Motor neuron (in vitro differentiated cells): ENCODE measurements at regions of chr10 and their contacts with region 1.

Region 1: DNA sequence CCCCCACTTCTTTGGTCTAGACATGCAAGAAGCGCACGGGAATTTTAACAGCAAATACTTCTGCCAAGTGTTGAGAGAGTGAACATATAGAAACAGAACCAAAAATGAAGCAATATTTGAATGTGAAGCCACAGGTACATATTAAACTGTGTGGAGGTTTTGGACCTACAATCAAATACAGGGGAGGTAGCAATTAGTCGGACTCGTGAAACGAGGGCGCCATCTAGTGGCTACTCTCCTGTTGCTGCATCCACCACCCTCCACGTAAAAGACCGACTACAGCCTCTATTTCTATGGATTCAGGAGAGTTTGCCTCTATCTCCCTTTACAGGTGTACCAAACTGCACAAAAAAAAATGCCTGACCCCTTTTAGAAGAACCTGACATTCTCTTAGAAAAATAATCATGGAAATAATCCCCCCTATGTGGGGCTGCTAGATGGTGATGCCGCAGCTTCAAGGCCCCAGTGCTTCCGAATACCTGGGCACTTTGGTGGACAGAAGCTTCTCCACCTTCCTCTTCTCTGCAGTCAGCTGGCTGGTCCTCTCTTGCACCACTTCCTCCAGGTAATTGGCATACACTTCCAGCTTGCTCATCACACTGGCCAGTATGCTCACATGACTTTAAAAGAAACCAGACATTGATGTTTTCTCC is 31.7 kb downstream of the TECTB start:
- ATAC-seq: peak; percentile 86 to 100 (median 94)
- H3K4me3 ChIP-seq: no peak overlapping the region
- H3K27ac ChIP-seq: no peak overlapping the region
- H3K4me1 ChIP-seq: no peaks in the 10 kb centered on the region

Region 2: GRCh38 chr10:111076191-111076681 is 1238.7 kb before region 1 on chr10:
- in situ Hi-C with region 1: loop called in 1 of 9 experiments (anchors 25 kb)
- ATAC-seq: peak; percentile 71 to 83 (median 80)
- H3K4me3 ChIP-seq: peak overlapping the region; percentile 36 to 50 (median 45)
- H3K27ac ChIP-seq: no peak overlapping the region
- H3K4me1 ChIP-seq: peaks cover 0 to 6% of the 10 kb centered on the region in 2 donors

Region 3: DNA sequence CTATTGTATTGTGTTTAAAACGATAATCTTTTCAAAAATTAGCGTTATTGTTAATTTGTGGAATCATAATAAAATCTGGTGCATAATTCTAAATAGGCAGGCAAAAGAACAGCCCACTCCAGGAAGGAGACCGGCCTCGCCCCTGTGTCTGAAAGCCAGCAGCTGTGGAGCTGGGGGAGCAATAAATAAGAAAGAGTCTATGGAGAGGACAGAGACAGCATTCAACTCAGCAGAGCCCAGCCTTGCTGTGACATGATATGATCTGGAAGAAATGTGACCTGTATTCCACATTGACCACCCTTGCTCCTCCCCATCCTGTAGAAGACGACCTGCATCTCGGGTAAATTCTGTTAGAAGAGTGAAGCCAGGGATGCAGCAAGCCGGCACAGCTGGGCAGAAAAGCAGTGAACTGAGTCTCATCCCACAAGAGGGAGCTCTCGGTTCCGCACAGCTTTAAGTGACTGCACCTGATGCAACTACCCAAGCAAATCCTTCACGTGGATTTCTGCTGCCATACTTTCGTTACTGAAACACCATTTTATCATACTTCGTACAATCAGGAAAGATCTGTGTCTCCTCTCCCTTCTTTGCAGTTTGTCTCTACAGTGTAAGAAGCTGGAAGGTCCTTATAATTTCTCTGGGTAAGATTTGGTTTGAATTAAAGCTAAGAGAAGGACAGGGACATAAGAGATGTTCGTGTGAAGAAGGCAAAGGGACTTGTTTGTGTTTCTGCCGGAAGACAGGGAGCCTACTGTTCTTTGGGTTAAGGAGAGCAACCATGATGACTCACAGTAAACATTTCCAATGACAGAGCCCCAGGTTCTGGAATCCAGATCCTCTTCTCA is 558.5 kb before region 1 on chr10:
- in situ Hi-C with region 1: loop called in 1 of 9 experiments (anchors 25 kb)
- ATAC-seq: peak; percentile 78 to 98 (median 91)
- H3K4me3 ChIP-seq: no peak overlapping the region
- H3K27ac ChIP-seq: no peak overlapping the region
- H3K4me1 ChIP-seq: peaks cover 0 to 6% of the 10 kb centered on the region in 2 donors

Region 4: DNA sequence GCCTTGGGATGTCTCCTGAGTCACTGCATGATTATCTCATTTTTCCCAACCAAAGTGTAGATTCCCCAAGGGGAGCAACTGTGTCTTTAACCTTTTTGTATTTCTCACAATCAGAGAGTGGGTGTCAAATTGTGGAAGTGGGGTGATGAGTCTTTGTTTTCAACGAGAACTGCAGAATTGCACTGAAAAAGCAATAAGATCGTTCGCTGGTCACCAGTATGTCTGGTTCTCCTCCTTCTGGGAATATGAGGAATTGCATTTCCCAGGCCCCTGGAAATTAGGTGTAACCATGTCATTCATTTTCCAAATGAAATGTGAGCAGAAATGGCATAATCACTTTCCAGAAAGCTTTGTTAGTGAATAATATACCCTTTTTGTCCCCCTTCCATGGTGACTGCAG is 458.3 kb before region 1 on chr10:
- in situ Hi-C with region 1: loop called in 1 of 9 experiments (anchors 25 kb)
- ATAC-seq: peak in 2 of 8 experiments; percentile 52 to 63
- H3K4me3 ChIP-seq: no peak overlapping the region
- H3K27ac ChIP-seq: no peak overlapping the region
- H3K4me1 ChIP-seq: no peaks in the 10 kb centered on the region

Region 5: DNA sequence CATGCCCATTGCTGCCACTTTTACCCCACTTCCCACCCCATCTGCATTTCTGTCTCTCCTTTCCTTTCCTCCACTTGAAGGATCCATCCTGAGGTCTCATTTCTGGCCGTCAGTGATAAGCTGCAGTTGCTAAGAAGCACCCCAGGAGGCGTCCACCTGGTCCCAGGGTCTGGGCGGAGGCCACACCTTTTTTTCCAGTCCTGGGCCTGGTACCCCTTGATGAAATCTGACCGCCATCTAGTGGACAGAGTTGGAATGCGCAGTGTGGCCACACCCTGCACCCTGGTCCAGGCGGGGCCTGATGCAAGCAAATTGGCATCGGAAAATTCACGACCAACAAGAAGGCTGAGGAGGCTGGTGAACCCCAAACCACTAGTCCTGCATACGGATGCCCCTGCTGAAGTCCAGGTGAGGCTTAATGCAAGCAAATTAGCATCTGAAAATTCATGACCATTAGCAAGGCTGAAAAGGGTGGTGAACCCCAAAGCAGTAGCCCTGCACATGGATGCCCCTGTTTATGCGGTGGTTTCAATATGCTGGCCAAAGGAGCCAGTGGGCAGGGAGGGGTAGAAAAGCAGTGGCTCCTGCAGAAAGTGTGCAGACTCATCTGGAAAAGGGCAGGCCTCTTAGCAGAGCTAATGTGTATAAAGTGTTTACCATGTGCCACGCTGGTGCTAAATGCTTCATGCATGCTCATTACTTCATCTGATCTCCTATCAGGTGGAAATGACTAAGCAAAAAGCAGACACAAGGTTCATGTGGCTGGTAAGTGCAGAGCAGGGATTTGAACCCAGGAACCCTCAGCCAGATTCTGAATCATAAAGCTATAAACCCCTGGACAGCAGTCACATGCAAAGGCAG is 174.6 kb before region 1 on chr10:
- in situ Hi-C with region 1: no loop called
- ATAC-seq: peak; percentile 78 to 95 (median 90)
- H3K4me3 ChIP-seq: no peak overlapping the region
- H3K27ac ChIP-seq: no peak overlapping the region
- H3K4me1 ChIP-seq: peaks cover 0 to 3% of the 10 kb centered on the region in 2 donors

Region 6: DNA sequence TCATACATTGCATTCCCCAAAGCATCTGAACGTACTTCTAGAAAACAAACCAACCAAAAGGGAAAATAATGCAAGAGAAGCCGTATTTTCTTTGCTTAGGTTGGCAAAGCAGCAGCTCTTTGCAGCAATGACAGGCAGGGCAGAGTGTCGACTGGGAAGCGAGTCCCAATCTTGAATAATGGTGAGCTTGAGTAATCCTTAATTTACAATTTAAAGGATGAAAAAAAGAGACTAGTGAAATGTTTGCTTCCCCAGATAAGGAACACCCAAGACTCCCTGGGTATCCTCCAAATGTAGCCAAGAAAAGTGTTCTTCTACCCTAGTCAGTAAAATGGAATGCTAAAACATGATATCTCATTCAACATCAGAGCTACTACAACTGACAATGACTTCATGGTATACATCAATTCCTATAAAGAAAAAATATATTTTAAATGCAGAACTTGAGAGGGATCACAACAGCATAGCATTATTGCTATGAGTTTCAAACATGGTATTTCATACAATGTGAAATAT is 163.4 kb before region 1 on chr10:
- in situ Hi-C with region 1: loop called in 1 of 9 experiments (anchors 25 kb)
- ATAC-seq: peak in 3 of 8 experiments; percentile 12 to 93 (median 84)
- H3K4me3 ChIP-seq: no peak overlapping the region
- H3K27ac ChIP-seq: no peak overlapping the region
- H3K4me1 ChIP-seq: no peaks in the 10 kb centered on the region

Region 7: DNA sequence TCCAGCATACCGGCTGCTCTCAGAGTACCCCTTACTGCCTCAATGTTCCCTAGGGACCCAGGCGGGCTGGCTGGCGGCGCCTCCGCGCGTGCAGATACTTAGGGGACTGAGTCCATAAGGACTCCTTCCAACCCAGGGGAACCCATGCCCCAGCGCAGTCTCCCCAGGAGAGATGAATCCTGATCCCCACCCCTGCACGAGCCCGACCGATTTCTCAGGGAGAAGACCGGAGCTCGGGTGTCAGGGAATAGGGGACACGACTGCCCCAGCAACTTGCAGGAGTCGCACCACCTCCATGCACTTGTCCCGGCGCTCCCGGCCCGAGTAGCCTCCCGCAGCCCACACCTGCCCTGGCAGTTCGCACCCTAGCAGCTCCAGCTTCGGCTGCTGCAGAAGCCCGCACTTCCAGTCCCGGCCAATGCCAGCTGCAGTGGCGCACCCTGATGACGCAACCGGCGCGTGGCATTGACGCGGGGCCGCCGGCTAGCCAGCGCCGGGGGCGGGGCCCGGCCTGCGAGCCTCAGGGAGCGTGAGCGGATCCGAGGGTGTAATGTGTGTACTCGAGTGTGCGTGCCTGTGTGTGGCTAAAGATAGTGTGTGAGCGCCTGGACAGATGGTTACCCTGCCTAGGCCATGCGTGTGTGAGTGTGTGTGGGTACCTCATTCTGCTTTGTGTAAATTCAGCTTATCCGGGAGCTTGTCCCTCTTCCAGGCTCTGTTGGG is 131.5 kb before region 1 on chr10 and contains the start of gene GPAM:
- in situ Hi-C with region 1: loop called in 1 of 9 experiments (anchors 25 kb)
- ATAC-seq: peak; percentile 94 to 99 (median 96)
- H3K4me3 ChIP-seq: peak within 1 kb of the TSS; percentile 77 to 90 (median 83)
- H3K27ac ChIP-seq: peak within 1 kb of the TSS; percentile 72 to 84
- H3K4me1 ChIP-seq: peaks cover 6 to 7% of the 10 kb centered on the region in 2 donors
- total RNA-seq, gene GPAM: 10.4 to 103 (median 14.1) TPM

Region 8: DNA sequence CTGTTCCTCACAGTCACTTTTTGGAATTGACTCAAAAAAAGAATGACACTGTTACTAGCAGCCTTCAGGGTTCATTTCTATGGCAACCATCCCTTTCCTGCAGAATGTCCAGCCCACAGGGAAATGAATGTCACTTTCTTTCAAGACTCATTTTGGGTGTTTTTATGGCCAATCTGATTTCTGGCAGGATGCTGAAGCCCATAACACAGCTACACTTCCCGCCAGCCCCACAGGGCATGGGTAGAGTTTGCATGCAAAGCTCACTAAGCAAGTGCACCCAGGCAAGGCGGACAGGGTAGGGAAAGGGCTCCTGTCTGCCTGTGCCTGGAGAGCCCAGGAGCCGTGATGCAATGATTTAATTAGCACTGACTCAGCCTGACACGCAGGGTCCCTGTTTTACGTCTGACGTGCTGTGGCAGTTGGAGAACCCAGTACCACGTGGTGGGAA is 105.2 kb before region 1 on chr10:
- in situ Hi-C with region 1: no loop called
- ATAC-seq: peak; percentile 59 to 99 (median 94)
- H3K4me3 ChIP-seq: no peak overlapping the region
- H3K27ac ChIP-seq: no peak overlapping the region
- H3K4me1 ChIP-seq: peaks cover 13 to 14% of the 10 kb centered on the region in 2 donors